Activated CD4-positive, alpha-beta T cell treated with anti-CD3 and anti-CD28 coated beads, Interleukin-2, amount 10 ng/mL, durations not matched to agents 24 days and 14 days (primary cell): ENCODE measurements at regions of chr2 and their contacts with region 1.

Region 1: GRCh38 chr2:187842978-187843847 is 289.0 kb upstream of the TFPI start:
- DNase-seq: peak; percentile 59
- H3K4me3 Mint-ChIP-seq: no peak overlapping the region
- H3K27ac Mint-ChIP-seq: no peak overlapping the region
- H3K4me1 Mint-ChIP-seq: no peaks in the 10 kb centered on the region
- H3K27me3 Mint-ChIP-seq: no peaks in the 10 kb centered on the region

Region 2: GRCh38 chr2:187499941-187500532 is 343.2 kb before region 1 on chr2:
- intact Hi-C with region 1: loop called (anchors 1 kb)
- DNase-seq: peak; percentile 82
- H3K4me3 Mint-ChIP-seq: no peak overlapping the region
- H3K27ac Mint-ChIP-seq: no peak overlapping the region
- H3K4me1 Mint-ChIP-seq: no peaks in the 10 kb centered on the region
- H3K27me3 Mint-ChIP-seq: peaks cover 5% of the 10 kb centered on the region